Dorsolateral prefrontal cortex (tissue), 120 donors: ENCODE measurements at regions of chr15 and their contacts with region 1.

Region 1: GRCh38 chr15:100602064-100602822 is at the starts of genes ASB7 and LINS1:
- DNase-seq: peak; percentile 99 to 100 (median 100)
- H3K4me3 ChIP-seq: peak within 1 kb of the TSS; percentile 78 to 100 (median 95)
- H3K27ac ChIP-seq: peak within 1 kb of the TSS in 58 of 59 donors; percentile 13 to 93 (median 84)
- H3K27me3 ChIP-seq: no peaks in the 10 kb centered on the region
- CTCF ChIP-seq: peak in 33 of 56 donors; percentile 2 to 62 (median 26)
- total RNA-seq, gene ASB7: 7.9 to 18.5 (median 12.6) TPM
- total RNA-seq, gene LINS1: 12.5 to 45.4 (median 28.1) TPM

Region 2: GRCh38 chr15:100341662-100342560 is 260.3 kb before region 1 on chr15 and contains the start of gene ADAMTS17:
- intact Hi-C with region 1: loop called in 1 of 2 experiments (anchors 1 kb)
- DNase-seq: peak; percentile 86 to 97 (median 96)
- H3K4me3 ChIP-seq: peak within 1 kb of the TSS; percentile 62 to 86 (median 77)
- H3K27ac ChIP-seq: peak within 1 kb of the TSS in 4 of 59 donors; percentile 7 to 61 (median 35)
- H3K27me3 ChIP-seq: peaks cover 0 to 4% (median 0%) of the 10 kb centered on the region in 45 donors
- CTCF ChIP-seq: peak; percentile 88 to 99 (median 97)
- total RNA-seq, gene ADAMTS17: 4.7 to 28.7 (median 11.1) TPM

Region 3: GRCh38 chr15:100349696-100350433 is 252.4 kb before region 1 on chr15:
- intact Hi-C with region 1: loop called in 1 of 2 experiments (anchors 2 kb)
- DNase-seq: peak; percentile 87 to 95 (median 92)
- H3K4me3 ChIP-seq: peak overlapping the region; percentile 53 to 94 (median 79)
- H3K27ac ChIP-seq: peak overlapping the region; percentile 37 to 96 (median 91)
- H3K27me3 ChIP-seq: peaks cover 0 to 12% (median 0%) of the 10 kb centered on the region in 45 donors
- CTCF ChIP-seq: peak; percentile 51 to 93 (median 78)

Region 4: GRCh38 chr15:100457201-100457600 is 145.0 kb before region 1 on chr15:
- intact Hi-C with region 1: no loop called
- DNase-seq: no peak
- H3K4me3 ChIP-seq: no peak overlapping the region
- H3K27ac ChIP-seq: no peak overlapping the region
- H3K27me3 ChIP-seq: no peaks in the 10 kb centered on the region
- CTCF ChIP-seq: no peak

Region 5: DNA sequence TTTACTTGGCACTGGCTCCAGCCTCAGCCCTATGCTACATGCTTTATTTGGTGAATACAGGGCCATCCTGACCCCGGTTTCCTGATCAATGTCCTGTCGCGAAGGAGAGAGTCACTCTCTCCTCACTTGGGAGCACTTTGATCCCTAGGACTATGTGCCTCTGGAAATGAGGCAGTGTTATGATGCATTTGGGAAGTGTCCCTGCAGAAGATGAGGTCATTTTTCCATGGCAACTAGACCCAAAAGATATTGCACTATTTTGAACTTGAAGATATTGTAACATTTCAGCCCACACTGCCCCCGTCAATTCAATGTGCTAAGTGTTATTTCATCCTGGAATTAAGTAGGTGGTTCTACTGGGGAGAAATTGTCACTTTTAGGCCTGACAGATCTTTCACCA is 384.9 kb after region 1 on chr15:
- intact Hi-C with region 1: no loop called
- DNase-seq: no peak
- H3K4me3 ChIP-seq: no peak overlapping the region
- H3K27ac ChIP-seq: no peak overlapping the region
- H3K27me3 ChIP-seq: peaks cover 0 to 6% (median 0%) of the 10 kb centered on the region in 45 donors
- CTCF ChIP-seq: no peak

Region 6: DNA sequence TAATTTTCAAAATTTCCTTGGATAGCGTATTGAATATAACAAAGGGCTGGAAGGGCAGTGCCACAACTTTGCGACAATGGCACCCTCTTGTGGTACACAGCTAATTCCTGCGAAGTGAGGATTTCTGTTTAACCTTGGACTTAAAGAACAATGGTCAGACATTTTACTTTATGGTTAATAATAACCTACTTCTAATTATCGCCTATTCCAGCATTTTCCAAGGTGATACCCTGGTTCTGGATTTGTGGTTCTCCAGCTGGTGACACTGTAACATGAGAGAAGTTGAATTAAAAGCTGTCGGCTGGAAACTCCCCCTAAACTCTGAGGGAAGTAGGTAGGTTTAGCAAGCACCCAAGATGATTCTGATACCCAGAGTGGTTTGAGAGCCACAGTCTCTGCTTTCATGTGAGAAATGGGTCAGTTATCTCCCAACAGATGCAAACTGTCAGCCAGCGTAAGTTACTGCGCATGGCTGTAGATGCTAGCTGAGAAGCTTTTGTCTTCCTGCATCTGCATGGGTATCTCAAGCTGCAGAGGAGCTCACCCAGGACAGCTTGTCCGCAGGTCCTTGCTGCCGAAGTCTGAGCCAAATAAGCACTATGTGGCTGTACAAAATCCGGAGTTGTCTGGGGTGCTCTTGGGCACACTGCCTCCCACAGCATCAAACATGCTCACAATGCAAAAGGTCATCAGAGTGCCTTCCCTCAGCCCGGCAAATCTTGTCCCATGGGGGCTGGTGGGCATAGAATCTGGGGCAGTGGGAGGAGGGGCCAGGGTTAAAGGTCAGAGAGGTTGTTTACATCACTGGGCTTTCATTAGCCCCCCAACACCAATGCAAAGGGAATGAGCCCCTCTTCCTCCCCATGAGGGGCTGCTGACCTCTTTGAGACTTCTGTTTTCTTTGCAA is 656.2 kb after region 1 on chr15:
- intact Hi-C with region 1: loop called in 1 of 2 experiments (anchors 2 kb)
- DNase-seq: peak in 7 of 10 donors; percentile 61 to 78 (median 64)
- H3K4me3 ChIP-seq: peak overlapping the region in 2 of 59 donors; percentile 7 to 8
- H3K27ac ChIP-seq: peak overlapping the region in 2 of 59 donors; percentile 35 to 50
- H3K27me3 ChIP-seq: no peaks in the 10 kb centered on the region
- CTCF ChIP-seq: peak; percentile 73 to 97 (median 89)

Region 7: DNA sequence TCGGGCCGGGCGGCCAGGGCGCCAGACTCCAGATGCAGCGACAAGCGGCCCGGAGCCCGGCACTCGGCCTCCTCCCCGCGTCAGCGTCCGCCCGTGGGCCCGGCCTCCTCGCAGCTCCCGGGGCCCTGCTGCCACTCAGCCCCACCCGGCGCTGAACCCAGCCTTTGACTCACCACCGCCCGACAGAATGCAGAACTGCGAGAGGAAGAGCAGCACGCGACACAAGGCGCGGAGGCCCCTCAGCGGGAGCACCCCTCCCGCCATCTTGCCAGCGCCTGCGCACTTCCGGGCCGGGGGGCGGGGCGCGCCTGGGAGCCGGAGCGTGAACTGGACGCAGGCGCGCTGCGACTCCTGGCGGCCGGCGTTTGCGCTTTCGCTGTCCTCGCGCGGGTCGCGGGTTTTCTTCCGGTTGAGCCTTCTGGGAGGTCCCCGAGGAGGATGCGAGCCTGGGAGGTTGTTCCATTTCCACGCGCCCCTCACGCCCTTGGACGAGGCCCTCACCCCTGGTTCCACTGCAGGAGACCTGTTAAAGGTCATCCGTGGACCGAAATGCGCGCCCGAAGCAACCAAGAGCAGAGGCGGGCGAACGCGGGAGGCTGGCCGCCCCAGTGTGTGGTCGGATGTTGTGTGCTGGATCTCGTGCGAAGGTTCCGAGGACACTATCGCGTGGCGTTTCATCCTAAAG is 1050.0 kb after region 1 on chr15 and contains the start of gene TM2D3:
- intact Hi-C with region 1: loop called in 1 of 2 experiments (anchors 5 kb)
- DNase-seq: peak; percentile 75 to 92 (median 90)
- H3K4me3 ChIP-seq: peak within 1 kb of the TSS; percentile 58 to 100 (median 91)
- H3K27ac ChIP-seq: peak within 1 kb of the TSS; percentile 82 to 99 (median 97)
- H3K27me3 ChIP-seq: no peaks in the 10 kb centered on the region
- CTCF ChIP-seq: peak; percentile 41 to 93 (median 80)
- total RNA-seq, gene TM2D3: 50.8 to 137 (median 106) TPM